ENCODE measurements at regions of chr20 and their contacts with region 1.

Region 1: GRCh38 chr20:45629496-45630100 is at the start of gene WFDC10A:
- DNase-seq: peak; percentile 53
- ATAC-seq: peak; percentile 91
- H3K4me3 Mint-ChIP-seq: no peak within 1 kb of the TSS
- H3K27ac Mint-ChIP-seq: no peak within 1 kb of the TSS
- H3K4me1 Mint-ChIP-seq: peaks cover 4% of the 10 kb centered on the region
- H3K27me3 Mint-ChIP-seq: peaks cover 39% of the 10 kb centered on the region
- total RNA-seq, gene WFDC10A: not detected

Region 2: DNA sequence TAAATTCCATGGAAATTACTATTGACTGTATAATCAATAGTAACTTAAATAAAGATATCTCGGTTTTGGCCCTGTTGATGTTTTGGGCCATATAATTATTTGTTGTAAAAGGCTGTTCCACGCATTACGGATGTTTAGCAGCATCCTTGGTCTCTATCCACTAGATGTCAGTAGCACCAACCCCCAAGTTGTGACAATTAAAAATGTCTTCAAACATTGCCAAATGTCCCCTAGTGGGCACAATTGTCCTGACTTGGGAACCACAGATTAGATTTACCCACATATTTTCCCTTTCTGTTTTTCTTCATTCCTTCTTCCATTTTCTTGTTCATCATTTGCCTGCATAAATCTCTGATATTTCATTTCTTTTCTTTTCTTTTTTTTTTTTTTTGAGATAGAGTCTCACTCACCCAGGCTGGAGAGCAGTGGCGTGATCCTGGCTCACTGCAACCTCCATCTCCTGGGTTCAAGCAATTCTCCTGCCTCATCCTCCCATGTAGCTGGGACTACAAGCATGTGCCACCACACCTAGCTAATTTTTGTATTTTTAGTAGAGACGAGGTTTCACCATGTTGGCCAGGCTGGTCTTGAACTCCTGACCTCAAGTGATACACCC is 36.9 kb before region 1 on chr20:
- CTCF ChIA-PET with region 1: interaction called, 3 read pairs
- POLR2A ChIA-PET with region 1: no interaction called
- intact Hi-C with region 1: loop called in 1 of 2 experiments (anchors 2 kb)
- DNase-seq: peak; percentile 48
- ATAC-seq: peak; percentile 78
- H3K4me3 Mint-ChIP-seq: no peak overlapping the region
- H3K27ac Mint-ChIP-seq: no peak overlapping the region
- H3K4me1 Mint-ChIP-seq: no peaks in the 10 kb centered on the region
- H3K27me3 Mint-ChIP-seq: peaks cover 24% of the 10 kb centered on the region

Region 3: DNA sequence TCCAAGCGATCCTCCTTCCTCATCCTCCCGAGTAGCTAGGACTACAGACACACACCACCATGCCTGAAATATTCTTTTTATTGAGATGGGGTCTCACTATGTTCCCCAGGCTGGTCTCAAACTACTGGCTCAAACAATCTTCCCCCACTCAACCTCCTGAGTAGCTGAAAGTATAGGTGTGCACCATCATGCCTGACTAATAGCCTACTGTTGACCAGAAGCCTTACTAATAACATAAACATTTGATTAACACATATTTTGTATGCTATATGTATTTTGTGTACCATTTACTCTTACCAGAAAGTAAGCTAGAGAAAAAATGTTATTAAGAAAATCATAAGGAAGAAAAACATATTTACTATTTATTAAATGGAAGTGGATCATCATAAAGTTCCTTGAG is 12.0 kb before region 1 on chr20:
- CTCF ChIA-PET with region 1: interaction called, 11 read pairs
- POLR2A ChIA-PET with region 1: no interaction called
- intact Hi-C with region 1: no loop called
- DNase-seq: no peak
- ATAC-seq: no peak
- H3K4me3 Mint-ChIP-seq: no peak overlapping the region
- H3K27ac Mint-ChIP-seq: no peak overlapping the region
- H3K4me1 Mint-ChIP-seq: no peaks in the 10 kb centered on the region
- H3K27me3 Mint-ChIP-seq: peaks cover 14% of the 10 kb centered on the region